GM12878 (cell line): ENCODE measurements at regions of chr10 and their contacts with region 1.

Region 1: DNA sequence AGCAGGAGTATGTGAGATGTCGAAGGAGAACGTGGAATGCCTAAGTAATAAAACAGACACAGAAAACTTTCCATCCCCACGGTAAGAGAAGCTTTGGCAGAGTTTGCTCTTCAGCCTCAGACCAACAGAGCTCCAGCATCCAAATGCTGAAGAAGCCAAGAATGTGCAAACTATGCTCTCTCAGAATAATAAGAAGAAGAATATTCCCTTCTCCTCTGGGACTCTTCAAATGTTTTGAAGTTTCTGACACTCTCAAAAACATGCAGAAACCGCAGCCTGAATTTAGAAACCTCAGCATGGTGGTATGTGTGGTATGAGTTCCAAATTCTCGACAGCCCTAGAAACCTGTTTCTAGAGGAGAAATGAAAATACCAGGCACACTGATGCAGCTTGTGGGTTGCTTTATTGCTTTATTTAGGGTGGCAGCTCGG is 113.3 kb downstream of the KCNMA1 start:
- DNase-seq: no peak
- ATAC-seq: no peak
- H3K4me3 ChIP-seq: no peak overlapping the region
- H3K27ac ChIP-seq: no peak overlapping the region
- H3K4me1 ChIP-seq: no peaks in the 10 kb centered on the region
- H3K27me3 ChIP-seq: no peaks in the 10 kb centered on the region; a peak in 1 of 4 replicates
- CTCF ChIP-seq: no peak
- EP300 ChIP-seq: no peak
- POLR2A ChIP-seq: no peak
- RAD21 ChIP-seq: no peak

Region 2: DNA sequence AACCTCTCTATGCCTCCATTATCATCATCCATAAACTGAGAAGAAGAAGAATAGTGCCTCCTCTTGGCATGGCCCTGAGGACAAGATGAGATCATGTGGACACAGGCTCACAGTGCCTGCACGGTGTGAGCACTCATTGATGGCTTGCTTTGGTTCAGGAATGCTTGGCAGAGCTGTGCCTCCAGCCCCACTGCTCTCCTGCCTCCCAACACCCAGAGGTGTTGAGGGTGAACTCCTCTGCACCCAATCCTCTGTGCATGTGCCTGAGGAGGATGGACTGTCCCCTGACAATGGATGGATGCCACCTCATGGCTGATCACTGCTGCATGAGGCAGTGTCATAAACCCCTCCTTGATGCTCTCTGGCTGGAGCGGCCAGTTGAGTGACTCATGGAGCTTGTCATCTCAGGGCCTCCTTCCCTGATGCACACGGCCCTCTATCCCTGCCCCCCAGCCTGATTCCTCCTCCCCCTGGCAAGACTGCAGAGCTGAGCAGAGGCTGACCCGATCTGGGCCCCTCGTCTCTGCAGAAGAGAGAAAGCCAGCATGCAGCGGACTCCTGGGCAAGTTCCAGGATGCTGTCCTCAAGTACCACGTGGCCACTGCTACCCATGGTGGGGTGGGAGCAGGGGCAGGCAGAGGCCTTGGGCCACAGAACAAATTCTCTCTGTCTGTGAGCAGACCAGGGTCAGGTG is 23.0 kb before region 1 on chr10:
- CTCF ChIA-PET with region 1: interaction called, 29 read pairs
- POLR2A ChIA-PET with region 1: interaction called, 29 read pairs
- RAD21 ChIA-PET with region 1: interaction called, 12 read pairs
- SMC1A ChIA-PET with region 1: interaction called, 74 read pairs
- in situ Hi-C with region 1: no loop called
- intact Hi-C with region 1: no loop called
- DNase-seq: no peak
- ATAC-seq: peak; percentile 32
- H3K4me3 ChIP-seq: no peak overlapping the region
- H3K27ac ChIP-seq: no peak overlapping the region
- H3K4me1 ChIP-seq: peaks cover 11% of the 10 kb centered on the region
- H3K27me3 ChIP-seq: no peaks in the 10 kb centered on the region
- CTCF ChIP-seq: no peak
- EP300 ChIP-seq: no peak
- POLR2A ChIP-seq: no peak
- RAD21 ChIP-seq: no peak

Region 3: GRCh38 chr10:77555591-77556212 is 31.4 kb after region 1 on chr10:
- CTCF ChIA-PET with region 1: no interaction called
- POLR2A ChIA-PET with region 1: interaction called, 10 read pairs
- RAD21 ChIA-PET with region 1: interaction called, 3 read pairs
- SMC1A ChIA-PET with region 1: interaction called, 6 read pairs
- in situ Hi-C with region 1: no loop called
- intact Hi-C with region 1: no loop called
- DNase-seq: no peak
- ATAC-seq: peak; percentile 26
- H3K4me3 ChIP-seq: no peak overlapping the region
- H3K27ac ChIP-seq: no peak overlapping the region
- H3K4me1 ChIP-seq: no peaks in the 10 kb centered on the region
- H3K27me3 ChIP-seq: no peaks in the 10 kb centered on the region
- CTCF ChIP-seq: no peak
- EP300 ChIP-seq: no peak
- POLR2A ChIP-seq: no peak
- RAD21 ChIP-seq: no peak

Region 4: GRCh38 chr10:77603534-77603927 is 79.2 kb after region 1 on chr10:
- CTCF ChIA-PET with region 1: interaction called, 4 read pairs
- POLR2A ChIA-PET with region 1: no interaction called
- RAD21 ChIA-PET with region 1: interaction called, 16 read pairs
- SMC1A ChIA-PET with region 1: interaction called, 12 read pairs
- in situ Hi-C with region 1: no loop called
- intact Hi-C with region 1: no loop called
- DNase-seq: no peak
- ATAC-seq: peak; percentile 88
- H3K4me3 ChIP-seq: no peak overlapping the region
- H3K27ac ChIP-seq: no peak overlapping the region
- H3K4me1 ChIP-seq: peaks cover 11% of the 10 kb centered on the region
- H3K27me3 ChIP-seq: no peaks in the 10 kb centered on the region
- CTCF ChIP-seq: no peak
- EP300 ChIP-seq: no peak
- POLR2A ChIP-seq: no peak
- RAD21 ChIP-seq: no peak